ENCODE measurements at regions of chr9 and their contacts with region 1.

Region 1: DNA sequence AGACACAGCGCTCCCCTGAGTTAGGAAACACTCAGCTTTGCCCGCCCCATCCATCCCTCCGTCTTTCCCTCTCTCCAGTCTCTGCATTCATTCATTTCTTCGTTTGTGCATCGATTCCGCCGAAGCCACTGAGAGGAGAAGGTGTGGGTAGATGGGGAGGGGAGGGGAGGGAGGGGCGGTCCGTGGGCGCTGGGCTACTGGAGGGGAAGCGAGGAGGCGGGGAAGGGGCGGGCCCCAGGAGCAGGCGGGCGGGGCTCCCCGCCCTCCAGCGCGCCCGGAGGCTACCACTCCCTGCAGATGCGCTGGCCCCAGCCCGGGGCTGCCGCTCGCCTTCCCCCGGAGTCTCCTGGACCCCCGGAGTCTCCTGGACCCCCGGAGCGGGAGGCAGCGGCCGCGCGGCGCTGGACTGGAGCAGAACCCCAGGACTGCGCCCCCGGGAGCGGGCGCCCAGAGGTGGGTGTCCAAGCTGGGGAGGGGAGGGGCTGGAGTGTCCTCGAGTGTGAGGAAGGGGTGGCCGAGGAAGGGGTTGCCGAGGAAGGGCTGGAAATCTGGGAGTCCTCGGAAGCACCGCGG is 159.5 kb downstream of the C9orf152 start:
- DNase-seq: peak; percentile 87
- H3K4me3 Mint-ChIP-seq: peak overlapping the region; percentile 96
- H3K27ac Mint-ChIP-seq: peak overlapping the region; percentile 78
- H3K4me1 Mint-ChIP-seq: peaks cover 45% of the 10 kb centered on the region
- H3K27me3 Mint-ChIP-seq: peaks cover 15% of the 10 kb centered on the region

Region 2: GRCh38 chr9:109918339-109919163 is 129.9 kb before region 1 on chr9:
- CTCF ChIA-PET with region 1: interaction called, 3 read pairs
- POLR2A ChIA-PET with region 1: interaction called, 40 read pairs
- DNase-seq: peak; percentile 49
- H3K4me3 Mint-ChIP-seq: peak overlapping the region; percentile 62
- H3K27ac Mint-ChIP-seq: peak overlapping the region; percentile 95
- H3K4me1 Mint-ChIP-seq: peaks cover 34% of the 10 kb centered on the region
- H3K27me3 Mint-ChIP-seq: no peaks in the 10 kb centered on the region

Region 3: DNA sequence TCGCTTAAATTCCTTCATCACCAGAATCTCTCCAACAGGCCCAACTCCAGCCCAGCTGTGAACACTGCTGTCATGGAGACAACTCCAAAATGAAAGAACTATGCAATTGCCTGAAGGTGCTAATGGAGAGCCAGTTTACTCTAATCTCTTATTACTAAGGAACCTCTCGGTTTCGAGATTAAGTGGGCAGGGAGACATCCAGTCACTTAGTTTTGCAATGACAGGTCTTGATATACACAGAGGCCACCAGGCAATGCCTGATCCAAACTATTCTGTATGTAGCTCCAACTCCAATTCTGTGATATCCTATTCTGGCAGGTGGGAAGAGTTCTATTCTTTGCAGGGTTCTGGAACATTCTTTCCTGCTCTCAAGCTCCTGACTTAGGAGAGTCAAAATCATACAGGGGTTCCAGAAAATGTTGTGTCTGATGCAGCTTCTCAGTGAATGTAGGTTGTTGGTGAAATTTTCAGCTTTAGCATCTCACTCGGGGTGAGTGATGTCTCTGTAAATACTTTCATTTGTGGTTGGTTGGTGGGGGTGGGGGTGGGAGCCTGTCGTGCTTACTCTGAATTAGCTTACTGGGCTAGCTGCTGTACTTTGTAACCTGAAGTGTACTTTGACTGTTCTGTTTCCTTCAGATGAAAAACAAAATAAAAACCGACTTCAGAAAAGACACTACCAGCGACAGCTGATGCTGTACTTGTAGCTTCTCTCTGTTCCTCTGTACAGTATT is 97.6 kb before region 1 on chr9:
- CTCF ChIA-PET with region 1: no interaction called
- POLR2A ChIA-PET with region 1: interaction called, 15 read pairs
- DNase-seq: no peak
- H3K4me3 Mint-ChIP-seq: no peak overlapping the region
- H3K27ac Mint-ChIP-seq: peak overlapping the region; percentile 64
- H3K4me1 Mint-ChIP-seq: peaks cover 28% of the 10 kb centered on the region
- H3K27me3 Mint-ChIP-seq: peaks cover 2% of the 10 kb centered on the region

Region 4: DNA sequence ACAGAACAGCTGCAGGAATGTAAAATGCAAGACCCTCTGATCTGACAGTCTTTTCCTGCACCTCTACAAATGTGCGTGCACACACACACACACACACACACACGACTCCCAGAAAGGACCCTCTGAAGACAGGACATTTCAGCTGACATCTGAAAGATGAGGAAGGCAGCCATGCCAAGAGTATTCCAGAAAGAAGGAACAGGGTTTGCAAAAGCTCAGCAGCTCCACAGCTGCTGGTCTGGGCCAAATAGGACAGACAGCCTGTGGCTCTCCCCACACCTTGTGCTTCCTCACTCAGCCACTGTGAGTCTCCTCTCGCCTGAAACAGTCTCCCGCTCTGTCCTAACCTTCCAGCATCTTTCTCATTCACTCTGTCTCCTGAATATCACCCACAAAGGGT is 79.5 kb before region 1 on chr9:
- CTCF ChIA-PET with region 1: interaction called, 6 read pairs
- POLR2A ChIA-PET with region 1: interaction called, 64 read pairs
- DNase-seq: no peak
- H3K4me3 Mint-ChIP-seq: no peak overlapping the region
- H3K27ac Mint-ChIP-seq: peak overlapping the region; percentile 29
- H3K4me1 Mint-ChIP-seq: peaks cover 60% of the 10 kb centered on the region
- H3K27me3 Mint-ChIP-seq: peaks cover 7% of the 10 kb centered on the region

Region 5: DNA sequence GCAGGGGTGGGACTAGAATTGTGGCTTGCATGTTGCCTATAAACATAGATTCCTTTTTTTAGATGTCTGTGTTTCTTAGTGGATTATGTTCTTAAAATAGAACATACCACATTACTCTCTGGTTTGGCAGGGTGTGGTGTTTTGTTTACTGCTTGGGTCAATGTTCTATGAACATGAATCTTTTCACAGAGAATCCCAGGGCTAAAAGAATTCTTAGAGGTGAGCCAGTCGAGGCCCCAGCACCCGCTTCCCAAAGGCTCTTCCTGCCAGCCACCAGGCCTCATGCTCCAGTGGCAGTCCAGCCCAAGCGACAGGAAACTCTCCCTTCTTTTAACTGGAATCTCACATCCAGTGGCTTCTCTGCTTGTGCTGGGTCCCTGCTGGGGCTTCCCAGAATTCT is 32.9 kb after region 1 on chr9:
- CTCF ChIA-PET with region 1: no interaction called
- POLR2A ChIA-PET with region 1: no interaction called
- DNase-seq: no peak
- H3K4me3 Mint-ChIP-seq: no peak overlapping the region
- H3K27ac Mint-ChIP-seq: no peak overlapping the region
- H3K4me1 Mint-ChIP-seq: peaks cover 27% of the 10 kb centered on the region
- H3K27me3 Mint-ChIP-seq: no peaks in the 10 kb centered on the region

Region 6: DNA sequence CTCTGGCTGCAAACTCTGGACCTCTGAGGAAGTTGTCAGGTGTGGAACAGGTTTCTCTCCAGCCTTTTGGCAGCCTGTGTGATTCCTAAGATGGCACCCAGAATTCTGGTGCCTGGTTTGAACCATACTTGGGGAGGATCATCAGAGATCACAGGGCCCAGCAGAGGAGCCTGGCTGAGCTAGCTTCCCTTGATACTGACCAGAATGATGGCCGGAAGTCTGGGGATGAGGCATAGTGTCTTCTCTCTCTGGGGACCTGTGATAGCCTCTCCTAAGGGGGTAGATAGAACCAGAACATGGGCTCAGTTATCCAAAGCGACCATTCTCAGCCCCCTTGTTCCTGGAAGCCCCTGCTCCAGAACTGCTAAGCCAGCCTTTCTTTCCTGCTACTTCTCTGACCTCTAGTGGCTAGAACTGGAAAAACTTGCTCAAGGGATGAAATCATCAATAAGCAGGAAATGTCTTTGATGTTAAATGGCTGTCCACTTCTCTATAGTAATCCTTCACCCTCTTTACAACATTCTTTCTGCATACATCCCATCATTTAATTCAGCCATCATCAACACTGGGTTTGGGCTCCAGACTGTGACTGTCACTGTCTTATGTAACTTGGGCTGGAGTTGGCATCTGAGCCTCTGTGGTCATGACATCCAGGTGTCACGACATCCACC is 104.3 kb after region 1 on chr9:
- CTCF ChIA-PET with region 1: interaction called, 9 read pairs
- POLR2A ChIA-PET with region 1: interaction called, 94 read pairs
- DNase-seq: no peak
- H3K4me3 Mint-ChIP-seq: no peak overlapping the region
- H3K27ac Mint-ChIP-seq: peak overlapping the region; percentile 73
- H3K4me1 Mint-ChIP-seq: peaks cover 91% of the 10 kb centered on the region
- H3K27me3 Mint-ChIP-seq: no peaks in the 10 kb centered on the region

Region 7: GRCh38 chr9:110256380-110257096 is 208.0 kb after region 1 on chr9 and contains the start of gene TXN:
- CTCF ChIA-PET with region 1: no interaction called
- POLR2A ChIA-PET with region 1: interaction called, 15 read pairs
- DNase-seq: peak; percentile 91
- H3K4me3 Mint-ChIP-seq: peak within 1 kb of the TSS; percentile 87
- H3K27ac Mint-ChIP-seq: peak within 1 kb of the TSS; percentile 96
- H3K4me1 Mint-ChIP-seq: peaks cover 54% of the 10 kb centered on the region
- H3K27me3 Mint-ChIP-seq: no peaks in the 10 kb centered on the region
- total RNA-seq, gene TXN: 315 TPM

Measured in activated CD4-positive, alpha-beta memory T cell treated with anti-CD3 and anti-CD28 coated beads, Interleukin-2, amount 10 ng/mL, durations not matched to agents 7 days and 5 days (primary cell).